ENCODE measurements at regions of chr11 and their contacts with region 1.

Region 1: DNA sequence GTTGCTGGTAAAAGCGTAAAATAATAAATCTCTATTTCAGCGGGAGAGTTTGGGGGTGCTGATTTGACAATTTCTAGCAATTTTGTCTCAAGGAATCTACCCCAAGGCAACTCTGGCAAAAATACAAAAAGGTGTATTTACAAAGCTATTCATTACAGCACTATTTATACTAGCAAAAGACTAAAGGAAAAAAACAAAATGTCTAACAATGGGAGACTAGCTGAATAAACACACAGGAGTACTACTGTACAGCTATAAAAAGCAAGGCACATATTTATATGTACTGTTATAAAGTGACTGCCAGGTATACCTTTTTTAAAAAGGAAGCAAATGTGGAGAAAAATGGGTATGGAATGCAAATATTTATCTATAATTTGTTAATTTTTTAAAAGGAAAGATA is 32.7 kb downstream of the SLC35F2 start:
- DNase-seq: no peak
- ATAC-seq: peak; percentile 33
- H3K4me3 ChIP-seq: no peak overlapping the region
- H3K27ac ChIP-seq: no peak overlapping the region
- H3K4me1 ChIP-seq: peaks cover 24% of the 10 kb centered on the region
- H3K27me3 ChIP-seq: no peaks in the 10 kb centered on the region
- CTCF ChIP-seq: no peak

Region 2: GRCh38 chr11:107853070-107853469 is 27.2 kb after region 1 on chr11:
- CTCF ChIA-PET with region 1: no interaction called
- POLR2A ChIA-PET with region 1: interaction called, 15 read pairs
- intact Hi-C with region 1: no loop called
- DNase-seq: no peak
- ATAC-seq: no peak
- H3K4me3 ChIP-seq: no peak overlapping the region
- H3K27ac ChIP-seq: no peak overlapping the region
- H3K4me1 ChIP-seq: peaks cover 15% of the 10 kb centered on the region
- H3K27me3 ChIP-seq: no peaks in the 10 kb centered on the region
- CTCF ChIP-seq: no peak

Region 3: GRCh38 chr11:107882095-107882820 is 56.4 kb after region 1 on chr11:
- CTCF ChIA-PET with region 1: no interaction called
- POLR2A ChIA-PET with region 1: no interaction called
- intact Hi-C with region 1: no loop called
- DNase-seq: peak; percentile 19
- ATAC-seq: no peak
- H3K4me3 ChIP-seq: no peak overlapping the region
- H3K27ac ChIP-seq: no peak overlapping the region
- H3K4me1 ChIP-seq: 0 out of 2 replicates have a peak, but pooled peaks cover 4% of the 10 kb centered on the region
- H3K27me3 ChIP-seq: no peaks in the 10 kb centered on the region
- CTCF ChIP-seq: no peak

Measured in PC-3 (cell line).